RWPE1 (cell line): ENCODE measurements at regions of chr1 and their contacts with region 1.

Region 1: GRCh38 chr1:28581536-28582247 is 10.4 kb upstream of the RAB42 start:
- DNase-seq: peak; percentile 94
- H3K27ac ChIP-seq: peak overlapping the region; percentile 88
- CTCF ChIP-seq: no peak

Region 2: GRCh38 chr1:28552758-28553663 is 28.7 kb before region 1 on chr1 and contains the start of gene TRNAU1AP:
- CTCF ChIA-PET with region 1: interaction called, 6 read pairs
- POLR2A ChIA-PET with region 1: interaction called, 13 read pairs
- DNase-seq: peak; percentile 97
- H3K27ac ChIP-seq: peak within 1 kb of the TSS; percentile 87
- CTCF ChIP-seq: no peak